ENCODE measurements at regions of chr13 and their contacts with region 1.

Region 1: DNA sequence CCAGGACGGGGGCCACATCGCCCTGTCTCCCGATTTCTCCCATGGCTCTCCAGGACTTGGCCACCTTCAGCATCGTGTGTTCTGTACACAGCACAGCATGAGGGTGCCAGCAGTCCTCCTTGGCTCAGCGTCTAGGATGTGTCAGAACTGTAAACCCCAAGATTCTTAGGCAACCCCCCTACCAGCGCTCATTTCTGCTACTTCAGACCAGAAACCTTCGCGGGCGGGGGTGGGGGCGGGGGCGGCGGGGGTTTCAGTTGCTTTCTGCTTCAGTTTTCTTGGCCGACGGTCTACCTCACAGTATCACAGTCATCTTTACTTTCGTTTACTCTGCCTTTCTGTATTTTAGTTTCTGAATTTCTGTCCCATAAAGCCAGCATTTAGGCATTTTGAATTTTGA is 82.4 kb downstream of the GGACT start:
- DNase-seq: no peak
- ATAC-seq: no peak
- H3K4me3 ChIP-seq: no peak overlapping the region
- H3K27ac ChIP-seq: no peak overlapping the region
- H3K4me1 ChIP-seq: no peaks in the 10 kb centered on the region
- H3K27me3 ChIP-seq: no peaks in the 10 kb centered on the region
- CTCF ChIP-seq: no peak

Region 2: DNA sequence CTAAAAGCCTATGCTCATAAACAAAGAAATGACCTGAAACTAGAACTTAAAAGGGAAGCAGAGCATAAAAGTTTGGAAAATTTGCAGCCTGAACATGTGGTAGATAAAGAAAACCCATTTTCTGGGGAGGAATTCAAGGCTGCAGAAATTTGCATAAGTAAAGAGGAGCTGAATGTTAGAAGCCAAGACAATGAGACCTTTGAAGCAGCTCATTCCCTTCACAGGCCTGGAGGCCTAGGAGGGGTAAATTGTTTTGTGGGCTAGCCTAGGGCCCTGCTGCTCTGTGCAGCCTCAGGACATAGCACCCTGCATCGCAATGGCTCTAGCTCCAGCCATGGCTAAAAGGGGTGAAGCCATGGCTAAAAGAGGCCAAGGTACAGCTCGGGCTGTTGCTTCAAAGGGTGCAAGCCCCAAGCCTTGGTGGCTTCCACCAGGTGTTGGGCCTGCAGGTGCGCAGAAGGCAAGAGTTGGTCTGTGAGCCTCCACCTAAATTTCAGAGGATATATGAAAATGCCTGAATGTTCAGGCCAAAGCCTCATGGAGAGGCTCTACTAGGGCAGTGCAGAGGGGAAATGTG is 486.3 kb before region 1 on chr13:
- intact Hi-C with region 1: no loop called
- DNase-seq: no peak
- ATAC-seq: no peak
- H3K4me3 ChIP-seq: no peak overlapping the region
- H3K27ac ChIP-seq: no peak overlapping the region
- H3K4me1 ChIP-seq: no peaks in the 10 kb centered on the region
- H3K27me3 ChIP-seq: no peaks in the 10 kb centered on the region
- CTCF ChIP-seq: no peak

Region 3: DNA sequence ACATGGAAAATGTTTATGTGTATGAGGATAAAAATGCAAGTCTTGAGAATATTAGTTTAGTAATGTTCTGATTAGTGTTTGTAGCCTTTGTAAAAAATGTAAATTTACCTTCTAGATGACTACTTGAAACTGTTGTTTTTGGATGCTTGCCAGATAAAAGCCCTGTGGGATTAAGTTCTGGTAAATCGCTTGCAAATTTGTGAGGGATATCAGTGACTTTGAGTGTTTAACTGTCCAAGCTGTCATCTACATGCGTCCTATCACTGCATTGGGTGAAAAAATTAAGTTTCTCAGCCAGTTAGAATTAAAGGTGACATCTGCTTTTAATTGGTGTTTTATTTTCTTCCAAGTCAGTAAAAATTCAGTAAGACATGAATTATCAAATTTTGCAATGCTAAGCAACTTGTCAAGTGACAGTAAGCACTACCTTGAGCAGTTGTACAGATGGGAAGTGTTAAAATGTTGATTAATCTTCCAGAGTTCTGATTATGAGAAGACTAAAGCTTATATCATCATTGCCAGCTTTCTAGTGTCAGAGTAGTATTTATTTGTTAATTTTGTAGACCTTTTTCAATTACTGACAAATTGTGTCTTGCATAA is 329.3 kb before region 1 on chr13:
- intact Hi-C with region 1: no loop called
- DNase-seq: no peak
- ATAC-seq: peak in 3 of 4 donors; percentile 23 to 47 (median 42)
- H3K4me3 ChIP-seq: no peak overlapping the region
- H3K27ac ChIP-seq: no peak overlapping the region
- H3K4me1 ChIP-seq: peaks cover 10 to 14% (median 12%) of the 10 kb centered on the region in 3 donors
- H3K27me3 ChIP-seq: no peaks in the 10 kb centered on the region
- CTCF ChIP-seq: no peak

Region 4: DNA sequence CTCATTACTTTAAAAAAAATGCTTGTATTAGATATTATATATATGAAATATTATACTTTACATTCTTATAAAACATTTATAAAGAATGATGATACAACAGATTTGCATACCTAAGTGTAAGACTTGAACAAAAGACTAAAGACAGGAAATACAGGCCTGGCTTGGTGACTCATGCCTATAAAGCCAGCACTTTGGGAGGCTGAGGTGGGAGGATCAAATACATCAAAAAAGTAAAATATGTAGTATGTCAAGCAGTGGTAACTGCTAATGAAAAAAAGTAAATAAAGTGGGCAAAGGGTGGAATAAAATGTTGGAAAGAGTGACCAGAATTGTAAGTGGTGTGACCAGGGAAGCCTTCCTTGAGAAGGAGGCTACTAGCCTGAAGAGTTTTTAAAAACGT is 51.3 kb before region 1 on chr13:
- intact Hi-C with region 1: loop called in 1 of 3 experiments (anchors 10 kb)
- DNase-seq: no peak
- ATAC-seq: no peak
- H3K4me3 ChIP-seq: no peak overlapping the region
- H3K27ac ChIP-seq: no peak overlapping the region
- H3K4me1 ChIP-seq: no peaks in the 10 kb centered on the region
- H3K27me3 ChIP-seq: no peaks in the 10 kb centered on the region
- CTCF ChIP-seq: no peak

Measured in pancreas (tissue), 10 donors.